ENCODE measurements at regions of chr9 and their contacts with region 1.

Region 1: GRCh38 chr9:33076358-33077004 is at the start of gene SMU1:
- DNase-seq: peak; percentile 98
- H3K4me3 Mint-ChIP-seq: peak within 1 kb of the TSS; percentile 96
- H3K27ac Mint-ChIP-seq: peak within 1 kb of the TSS; percentile 97
- H3K4me1 Mint-ChIP-seq: peaks cover 50% of the 10 kb centered on the region
- H3K27me3 Mint-ChIP-seq: no peaks in the 10 kb centered on the region
- total RNA-seq, gene SMU1: 23.7 to 23.9 TPM

Region 2: GRCh38 chr9:33024966-33025571 is 51.4 kb before region 1 on chr9 and contains the start of gene DNAJA1:
- CTCF ChIA-PET with region 1: interaction called, 3 read pairs
- intact Hi-C with region 1: loop called (anchors 1 kb)
- DNase-seq: peak; percentile 93
- H3K4me3 Mint-ChIP-seq: peak within 1 kb of the TSS; percentile 95
- H3K27ac Mint-ChIP-seq: peak within 1 kb of the TSS; percentile 94
- H3K4me1 Mint-ChIP-seq: peaks cover 75% of the 10 kb centered on the region
- H3K27me3 Mint-ChIP-seq: no peaks in the 10 kb centered on the region
- total RNA-seq, gene DNAJA1: 110 to 120 TPM

Region 3: GRCh38 chr9:33111631-33112030 is 35.1 kb after region 1 on chr9:
- CTCF ChIA-PET with region 1: no interaction called
- intact Hi-C with region 1: loop called (anchors 2 kb)
- DNase-seq: no peak
- H3K4me3 Mint-ChIP-seq: no peak overlapping the region
- H3K27ac Mint-ChIP-seq: peak overlapping the region; percentile 9
- H3K4me1 Mint-ChIP-seq: peaks cover 11% of the 10 kb centered on the region
- H3K27me3 Mint-ChIP-seq: no peaks in the 10 kb centered on the region

Region 4: DNA sequence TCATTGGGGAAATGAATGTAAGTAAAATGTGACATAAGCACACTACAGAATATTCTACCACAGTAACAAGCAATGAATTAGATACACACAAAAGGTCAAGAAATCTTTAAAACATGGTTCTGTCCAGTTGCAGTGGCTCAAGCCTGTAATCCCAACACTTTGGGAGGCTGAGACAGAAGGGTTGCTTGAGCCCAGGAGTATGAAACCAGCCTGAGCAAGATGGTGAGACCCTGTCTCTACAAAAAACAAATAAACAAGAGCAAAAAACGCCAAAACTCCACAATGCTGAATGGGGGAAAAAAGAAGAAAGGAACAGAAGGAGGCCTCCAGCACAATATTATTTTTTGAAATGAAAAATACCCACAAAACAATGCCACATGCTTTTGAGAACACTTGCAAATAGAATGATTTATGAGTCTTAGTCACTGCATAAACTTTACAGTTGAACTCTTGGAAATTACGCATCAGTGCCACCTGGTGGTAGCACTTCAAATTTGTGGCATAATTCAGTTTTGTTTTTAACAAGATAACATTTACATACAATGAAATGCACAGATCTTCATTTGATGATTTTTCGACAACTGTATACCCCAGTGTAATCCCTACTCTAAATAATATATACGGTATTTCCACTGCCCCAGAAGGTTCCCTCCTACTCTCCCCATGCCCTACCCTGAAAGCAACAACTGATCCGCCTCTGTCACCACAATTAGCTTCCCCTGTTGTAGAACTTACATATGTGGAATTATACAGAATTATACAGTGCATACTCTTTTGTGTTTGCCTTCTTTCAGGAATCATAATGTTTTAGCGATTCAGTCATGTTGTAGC is 149.1 kb after region 1 on chr9:
- CTCF ChIA-PET with region 1: interaction called, 36 read pairs
- intact Hi-C with region 1: loop called (anchors 1 kb)
- DNase-seq: peak; percentile 89
- H3K4me3 Mint-ChIP-seq: no peak overlapping the region
- H3K27ac Mint-ChIP-seq: peak overlapping the region; percentile 4
- H3K4me1 Mint-ChIP-seq: peaks cover 15% of the 10 kb centered on the region
- H3K27me3 Mint-ChIP-seq: no peaks in the 10 kb centered on the region

Region 5: DNA sequence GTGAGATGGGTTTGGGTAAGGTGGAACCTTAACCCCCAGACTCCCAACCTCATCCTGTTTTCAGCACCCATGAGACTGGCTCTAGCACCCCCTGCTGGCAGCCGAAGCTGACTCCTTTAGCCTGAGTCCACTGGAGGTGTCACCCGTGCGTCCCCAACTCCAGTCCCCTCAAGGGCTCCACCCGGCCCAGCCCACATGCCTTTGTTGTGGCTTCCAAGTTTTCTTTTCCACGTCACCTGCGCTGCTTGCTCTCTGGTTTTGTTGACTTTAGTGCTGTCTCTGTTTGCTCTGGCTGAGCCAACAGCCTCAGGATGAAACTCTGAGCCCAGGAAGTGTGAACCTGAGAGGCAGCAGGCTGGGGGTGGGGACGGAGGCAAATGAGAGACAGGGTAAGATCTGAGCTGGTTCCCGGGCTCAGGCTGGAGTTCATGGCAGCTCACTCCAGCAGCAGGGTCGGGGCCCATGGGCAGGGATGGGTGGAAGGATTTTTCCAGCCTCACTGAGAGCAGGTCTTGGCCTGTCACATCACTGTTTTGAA is 339.1 kb after region 1 on chr9:
- CTCF ChIA-PET with region 1: no interaction called
- intact Hi-C with region 1: loop called (anchors 1 kb)
- DNase-seq: peak; percentile 98
- H3K4me3 Mint-ChIP-seq: no peak overlapping the region
- H3K27ac Mint-ChIP-seq: peak overlapping the region; percentile 89
- H3K4me1 Mint-ChIP-seq: peaks cover 43% of the 10 kb centered on the region
- H3K27me3 Mint-ChIP-seq: no peaks in the 10 kb centered on the region

Measured in activated naive CD4-positive, alpha-beta T cell treated with anti-CD3 and anti-CD28 coated beads for 36 hours (primary cell).